ENCODE measurements at regions of chr6 and their contacts with region 1.

Region 1: GRCh38 chr6:30719791-30720737 is at the start of gene TUBB:
- DNase-seq: peak in 1 of 2 donors; percentile 99
- H3K4me3 ChIP-seq: peak within 1 kb of the TSS; percentile 84 to 92
- H3K27ac ChIP-seq: peak within 1 kb of the TSS; percentile 94
- H3K4me1 ChIP-seq: peaks cover 65% of the 10 kb centered on the region
- H3K27me3 ChIP-seq: no peaks in the 10 kb centered on the region
- CTCF ChIP-seq: no peak
- POLR2A ChIP-seq: peak in 1 of 2 donors; percentile 91
- total RNA-seq, gene TUBB: 293 TPM

Region 2: DNA sequence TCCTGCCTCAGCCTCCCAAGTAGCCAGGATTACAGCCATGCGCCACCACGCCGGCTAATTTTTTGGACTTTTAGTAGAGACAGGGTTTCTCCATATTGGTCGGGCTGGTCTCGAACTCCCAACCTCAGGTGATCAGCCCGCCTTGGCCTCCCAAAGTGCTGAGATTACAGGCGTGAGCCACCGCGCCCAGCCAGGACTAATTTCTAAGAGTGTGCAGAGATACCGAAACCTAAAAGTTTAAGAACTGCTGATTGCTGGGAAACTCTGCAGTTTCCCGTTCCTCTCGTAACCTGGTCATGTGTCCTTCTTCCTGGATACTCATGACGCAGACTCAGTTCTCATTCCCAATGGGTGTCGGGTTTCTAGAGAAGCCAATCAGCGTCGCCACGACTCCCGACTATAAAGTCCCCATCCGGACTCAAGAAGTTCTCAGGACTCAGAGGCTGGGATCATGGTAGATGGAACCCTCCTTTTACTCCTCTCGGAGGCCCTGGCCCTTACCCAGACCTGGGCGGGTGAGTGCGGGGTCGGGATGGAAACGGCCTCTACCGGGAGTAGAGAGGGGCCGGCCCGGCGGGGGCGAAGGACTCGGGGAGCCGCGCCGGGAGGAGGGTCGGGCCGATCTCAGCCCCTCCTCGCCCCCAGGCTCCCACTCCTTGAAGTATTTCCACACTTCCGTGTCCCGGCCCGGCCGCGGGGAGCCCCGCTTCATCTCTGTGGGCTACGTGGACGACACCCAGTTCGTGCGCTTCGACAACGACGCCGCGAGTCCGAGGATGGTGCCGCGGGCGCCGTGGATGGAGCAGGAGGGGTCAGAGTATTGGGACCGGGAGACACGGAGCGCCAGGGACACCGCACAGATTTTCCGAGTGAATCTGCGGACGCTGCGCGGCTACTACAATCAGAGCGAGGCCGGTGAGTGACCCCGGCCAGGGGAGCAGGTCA is 230.7 kb before region 1 on chr6 and contains the start of gene HLA-E:
- intact Hi-C with region 1: loop called (anchors 5 kb)
- DNase-seq: peak in 1 of 2 donors; percentile 99
- H3K4me3 ChIP-seq: peak within 1 kb of the TSS; percentile 98 to 100
- H3K27ac ChIP-seq: peak within 1 kb of the TSS; percentile 100
- H3K4me1 ChIP-seq: peaks cover 44% of the 10 kb centered on the region
- H3K27me3 ChIP-seq: no peaks in the 10 kb centered on the region
- CTCF ChIP-seq: peak in 1 of 3 experiments; percentile 4
- POLR2A ChIP-seq: peak; percentile 84 to 99
- total RNA-seq, gene HLA-E: 618 TPM

Region 3: GRCh38 chr6:30678964-30679726 is 40.9 kb before region 1 on chr6:
- intact Hi-C with region 1: loop called (anchors 1 kb)
- DNase-seq: no peak
- H3K4me3 ChIP-seq: peak overlapping the region; percentile 9 to 21
- H3K27ac ChIP-seq: peak overlapping the region; percentile 92
- H3K4me1 ChIP-seq: peaks cover 60% of the 10 kb centered on the region
- H3K27me3 ChIP-seq: no peaks in the 10 kb centered on the region
- CTCF ChIP-seq: peak; percentile 90 to 98 (median 96)
- POLR2A ChIP-seq: no peak

Region 4: GRCh38 chr6:30686908-30687658 is 33.0 kb before region 1 on chr6:
- intact Hi-C with region 1: loop called (anchors 2 kb)
- DNase-seq: peak in 1 of 2 donors; percentile 99
- H3K4me3 ChIP-seq: peak overlapping the region; percentile 93 to 97
- H3K27ac ChIP-seq: peak overlapping the region; percentile 92
- H3K4me1 ChIP-seq: peaks cover 70% of the 10 kb centered on the region
- H3K27me3 ChIP-seq: no peaks in the 10 kb centered on the region
- CTCF ChIP-seq: no peak
- POLR2A ChIP-seq: peak in 1 of 2 donors; percentile 43

Measured in vagina (tissue), 2 donors.